ENCODE measurements at regions of chr9 and their contacts with region 1.

Region 1: DNA sequence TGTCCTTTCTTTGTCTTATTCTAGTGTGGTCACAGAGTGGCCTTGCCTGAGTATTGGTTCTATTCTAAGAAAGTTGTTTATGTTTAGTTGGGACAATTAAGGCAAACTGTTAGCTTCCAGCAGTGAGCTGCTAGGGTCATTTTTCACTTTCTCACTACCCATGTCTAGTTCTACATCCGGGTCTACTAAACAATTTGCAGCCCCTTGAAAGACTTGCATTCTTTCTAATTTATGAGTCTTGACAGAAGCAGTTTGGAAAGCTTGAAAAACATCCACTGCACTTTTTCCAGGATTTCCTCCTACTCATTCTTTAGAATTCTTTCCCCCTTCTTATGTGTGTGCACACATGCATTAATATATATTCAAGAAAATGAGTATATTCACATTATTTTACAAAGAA is 892.2 kb upstream of the ACO1 start:
- DNase-seq: no peak
- H3K4me3 ChIP-seq: no peak overlapping the region
- H3K27ac ChIP-seq: no peak overlapping the region
- H3K4me1 ChIP-seq: no peaks in the 10 kb centered on the region
- H3K27me3 ChIP-seq: no peaks in the 10 kb centered on the region
- CTCF ChIP-seq: no peak
- EP300 ChIP-seq: no peak
- POLR2A ChIP-seq: no peak

Region 2: DNA sequence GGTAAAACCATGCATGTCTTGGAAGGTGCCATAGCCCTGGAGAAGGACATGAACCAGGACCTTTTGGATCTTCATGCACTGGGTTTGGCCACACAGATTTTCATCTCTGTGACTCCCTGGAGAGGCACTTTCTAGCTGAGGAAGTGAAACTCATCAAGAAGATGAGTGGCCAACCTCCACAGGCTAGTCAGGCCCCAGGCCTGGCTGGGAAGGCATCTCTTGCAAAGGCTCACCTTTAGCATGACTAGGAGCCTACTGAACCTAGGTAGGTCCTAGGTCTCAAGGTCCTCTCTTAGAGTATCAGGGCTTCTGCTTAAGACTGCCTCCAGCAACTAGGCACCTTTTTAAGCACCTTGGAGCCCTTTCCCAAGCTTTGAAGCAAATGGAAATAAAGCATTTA is 556.5 kb before region 1 on chr9:
- intact Hi-C with region 1: loop called in 1 of 4 experiments (anchors 5 kb)
- DNase-seq: no peak
- H3K4me3 ChIP-seq: no peak overlapping the region
- H3K27ac ChIP-seq: no peak overlapping the region
- H3K4me1 ChIP-seq: no peaks in the 10 kb centered on the region
- H3K27me3 ChIP-seq: no peaks in the 10 kb centered on the region
- CTCF ChIP-seq: no peak
- EP300 ChIP-seq: no peak
- POLR2A ChIP-seq: no peak

Region 3: GRCh38 chr9:31542384-31543055 is 50.3 kb after region 1 on chr9:
- intact Hi-C with region 1: no loop called
- DNase-seq: peak; percentile 20 to 55 (median 22)
- H3K4me3 ChIP-seq: no peak overlapping the region
- H3K27ac ChIP-seq: peak overlapping the region in 1 of 2 donors; percentile 45
- H3K4me1 ChIP-seq: no peaks in the 10 kb centered on the region
- H3K27me3 ChIP-seq: no peaks in the 10 kb centered on the region
- CTCF ChIP-seq: peak; percentile 13 to 49 (median 26)
- EP300 ChIP-seq: no peak
- POLR2A ChIP-seq: no peak

Region 4: DNA sequence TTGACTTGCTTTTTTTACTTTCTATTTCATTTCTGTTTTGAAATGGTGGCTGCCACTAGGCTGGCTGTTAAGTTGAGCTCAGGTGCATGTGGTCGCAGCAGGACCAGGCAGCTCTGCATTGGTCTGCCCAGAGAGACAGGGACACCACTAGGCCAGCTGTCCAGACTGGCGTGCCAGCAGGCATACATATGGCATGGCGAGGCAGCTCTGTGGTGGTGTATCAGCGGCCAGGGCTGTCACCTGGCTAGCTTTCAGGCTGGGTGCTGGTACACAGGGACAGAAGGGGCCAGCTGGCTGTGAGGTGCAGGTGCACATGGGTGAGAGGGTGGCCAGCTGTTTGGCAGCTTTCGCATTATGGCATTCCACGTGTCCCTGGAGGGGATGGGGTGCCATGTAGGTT is 238.2 kb after region 1 on chr9:
- intact Hi-C with region 1: no loop called
- DNase-seq: no peak
- H3K4me3 ChIP-seq: no peak overlapping the region
- H3K27ac ChIP-seq: no peak overlapping the region
- H3K4me1 ChIP-seq: no peaks in the 10 kb centered on the region
- H3K27me3 ChIP-seq: no peaks in the 10 kb centered on the region
- CTCF ChIP-seq: no peak
- EP300 ChIP-seq: no peak
- POLR2A ChIP-seq: no peak

Region 5: DNA sequence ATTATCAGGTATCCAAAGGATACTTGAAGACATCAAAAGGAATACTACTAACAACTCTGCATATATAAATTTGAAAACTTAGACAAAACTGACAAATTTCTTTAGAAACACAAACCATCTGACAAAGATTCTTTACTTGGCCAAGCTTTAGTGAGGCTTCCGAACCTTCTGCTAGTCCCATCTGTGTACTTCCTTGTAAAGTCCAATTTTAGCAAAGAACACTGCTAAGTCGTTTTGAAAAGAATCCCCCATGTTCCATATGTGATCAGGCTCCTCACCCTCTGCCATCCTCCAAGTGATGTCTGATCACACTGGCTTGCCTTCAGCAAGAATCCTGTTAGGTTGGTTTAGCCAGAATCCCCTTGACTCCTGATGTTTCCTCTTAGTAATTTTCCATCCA is 742.2 kb after region 1 on chr9:
- intact Hi-C with region 1: no loop called
- DNase-seq: no peak
- H3K4me3 ChIP-seq: no peak overlapping the region
- H3K27ac ChIP-seq: no peak overlapping the region
- H3K4me1 ChIP-seq: no peaks in the 10 kb centered on the region
- H3K27me3 ChIP-seq: no peaks in the 10 kb centered on the region
- CTCF ChIP-seq: no peak
- EP300 ChIP-seq: no peak
- POLR2A ChIP-seq: no peak

Region 6: DNA sequence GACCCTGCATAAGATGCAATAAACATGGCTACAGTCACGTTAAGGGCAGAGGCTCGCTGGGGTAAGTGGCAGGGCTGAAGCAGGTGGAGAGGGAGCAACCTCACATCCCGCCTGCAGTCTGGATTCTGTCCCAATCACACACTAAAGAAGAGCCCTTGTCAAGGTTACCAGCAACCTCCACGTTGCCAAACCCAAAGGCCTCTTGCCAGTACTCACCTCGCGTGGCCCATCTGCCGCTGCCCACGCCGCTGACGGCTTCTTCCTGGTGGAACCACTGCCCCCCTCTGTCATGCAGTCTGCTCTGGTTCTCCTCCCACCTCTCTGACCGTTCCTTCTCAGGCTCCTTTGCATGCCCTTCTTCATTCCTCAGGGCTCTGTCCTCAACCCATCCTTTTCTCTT is 1901.3 kb after region 1 on chr9:
- intact Hi-C with region 1: no loop called
- DNase-seq: peak in 4 of 5 donors; percentile 42 to 61 (median 56)
- H3K4me3 ChIP-seq: no peak overlapping the region
- H3K27ac ChIP-seq: peak overlapping the region in 1 of 2 donors; percentile 68
- H3K4me1 ChIP-seq: peaks cover 20% of the 10 kb centered on the region
- H3K27me3 ChIP-seq: no peaks in the 10 kb centered on the region
- CTCF ChIP-seq: no peak
- EP300 ChIP-seq: no peak
- POLR2A ChIP-seq: no peak